ENCODE measurements at regions of chr2 and their contacts with region 1.

Region 1: GRCh38 chr2:96145036-96145847 is at the start of gene DUSP2:
- DNase-seq: peak; percentile 95
- H3K4me3 Mint-ChIP-seq: peak within 1 kb of the TSS; percentile 96
- H3K27ac Mint-ChIP-seq: peak within 1 kb of the TSS; percentile 99
- H3K4me1 Mint-ChIP-seq: peaks cover 52% of the 10 kb centered on the region
- H3K27me3 Mint-ChIP-seq: no peaks in the 10 kb centered on the region
- total RNA-seq, gene DUSP2: 429 to 463 TPM

Region 2: DNA sequence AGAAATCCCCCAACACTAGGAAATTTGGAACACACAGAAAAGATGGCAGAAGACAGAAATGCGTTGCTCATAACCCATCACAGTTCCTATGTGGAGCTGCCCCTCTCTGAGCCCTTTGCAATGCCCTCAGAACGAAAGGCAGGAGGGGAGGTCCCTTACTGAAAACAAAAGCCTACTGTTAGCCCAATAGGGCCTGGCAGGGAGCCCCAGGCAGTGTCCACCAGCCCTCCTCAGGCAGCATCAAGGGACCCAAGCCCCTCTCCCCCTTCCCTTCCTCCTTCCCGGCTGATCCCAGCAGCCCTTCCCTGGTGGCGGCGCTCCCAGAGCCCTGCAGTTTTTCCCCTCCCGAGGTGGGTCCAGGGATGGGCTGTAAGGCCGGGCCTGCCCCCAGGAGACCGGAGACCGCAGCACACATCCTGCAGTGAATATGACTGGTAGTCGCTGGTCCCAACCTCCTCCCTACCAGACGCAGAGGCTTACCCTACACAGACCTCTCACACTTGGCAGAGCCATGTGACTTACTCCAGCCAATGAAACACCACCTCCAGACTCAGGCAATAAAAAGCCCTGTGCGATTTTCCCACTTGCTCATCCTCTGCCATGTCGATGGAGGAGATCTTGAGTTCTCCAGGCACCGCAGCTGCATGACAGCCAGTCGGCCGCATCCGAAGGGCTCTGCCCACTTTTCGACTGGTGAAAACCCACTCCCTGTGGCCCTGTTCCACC is 19.4 kb after region 1 on chr2:
- CTCF ChIA-PET with region 1: interaction called, 76 read pairs
- intact Hi-C with region 1: loop called (anchors 1 kb)
- DNase-seq: peak; percentile 89
- H3K4me3 Mint-ChIP-seq: peak overlapping the region; percentile 85
- H3K27ac Mint-ChIP-seq: peak overlapping the region; percentile 99
- H3K4me1 Mint-ChIP-seq: peaks cover 71% of the 10 kb centered on the region
- H3K27me3 Mint-ChIP-seq: no peaks in the 10 kb centered on the region

Region 3: GRCh38 chr2:96241900-96242611 is 96.8 kb after region 1 on chr2:
- CTCF ChIA-PET with region 1: no interaction called
- intact Hi-C with region 1: loop called (anchors 1 kb)
- DNase-seq: peak; percentile 84
- H3K4me3 Mint-ChIP-seq: no peak overlapping the region
- H3K27ac Mint-ChIP-seq: peak overlapping the region; percentile 88
- H3K4me1 Mint-ChIP-seq: peaks cover 43% of the 10 kb centered on the region
- H3K27me3 Mint-ChIP-seq: no peaks in the 10 kb centered on the region

Region 4: GRCh38 chr2:96320728-96321622 is 175.7 kb after region 1 on chr2:
- CTCF ChIA-PET with region 1: no interaction called
- intact Hi-C with region 1: loop called (anchors 5 kb)
- DNase-seq: peak; percentile 36
- H3K4me3 Mint-ChIP-seq: peak overlapping the region; percentile 88
- H3K27ac Mint-ChIP-seq: peak overlapping the region; percentile 39
- H3K4me1 Mint-ChIP-seq: peaks cover 41% of the 10 kb centered on the region
- H3K27me3 Mint-ChIP-seq: peaks cover 2% of the 10 kb centered on the region

Region 5: GRCh38 chr2:96374211-96374951 is 229.1 kb after region 1 on chr2:
- CTCF ChIA-PET with region 1: no interaction called
- intact Hi-C with region 1: no loop called
- DNase-seq: no peak
- H3K4me3 Mint-ChIP-seq: no peak overlapping the region
- H3K27ac Mint-ChIP-seq: no peak overlapping the region
- H3K4me1 Mint-ChIP-seq: no peaks in the 10 kb centered on the region
- H3K27me3 Mint-ChIP-seq: no peaks in the 10 kb centered on the region

Region 6: GRCh38 chr2:96527286-96528005 is 382.2 kb after region 1 on chr2:
- CTCF ChIA-PET with region 1: no interaction called
- intact Hi-C with region 1: loop called (anchors 1 kb)
- DNase-seq: peak; percentile 87
- H3K4me3 Mint-ChIP-seq: peak overlapping the region; percentile 78
- H3K27ac Mint-ChIP-seq: peak overlapping the region; percentile 99
- H3K4me1 Mint-ChIP-seq: peaks cover 61% of the 10 kb centered on the region
- H3K27me3 Mint-ChIP-seq: no peaks in the 10 kb centered on the region

Measured in activated naive CD4-positive, alpha-beta T cell treated with anti-CD3 and anti-CD28 coated beads for 36 hours (primary cell).